Common myeloid progenitor, CD34-positive (primary cell): ENCODE measurements at regions of chr1 and their contacts with region 1.

Region 1: GRCh38 chr1:153842006-153842471 is 66.8 kb downstream of the SLC27A3 start:
- DNase-seq: no peak
- H3K4me3 ChIP-seq: no peak overlapping the region
- H3K27ac ChIP-seq: no peak overlapping the region
- H3K4me1 ChIP-seq: no peaks in the 10 kb centered on the region
- H3K27me3 ChIP-seq: no peaks in the 10 kb centered on the region

Region 2: DNA sequence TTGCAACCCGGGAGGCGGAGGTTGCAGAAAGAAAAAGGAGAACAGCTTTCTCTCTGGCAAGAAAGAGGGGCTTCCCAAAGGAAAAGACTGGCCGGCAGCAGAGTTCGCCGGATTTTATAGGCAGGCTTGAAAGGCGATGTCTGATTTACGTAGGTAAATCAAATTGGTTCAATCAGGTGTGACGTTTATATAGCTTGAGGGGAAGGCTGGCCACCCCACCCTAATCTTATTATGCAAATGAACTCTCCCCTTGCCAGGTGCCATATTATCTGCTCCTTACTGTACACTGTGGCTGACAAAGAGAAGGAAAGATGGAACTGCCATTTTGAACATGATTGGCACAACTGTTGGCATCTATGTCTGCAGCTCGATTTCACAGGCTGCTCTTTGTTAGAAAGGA is 131.0 kb before region 1 on chr1:
- CTCF ChIA-PET with region 1: no interaction called
- POLR2A ChIA-PET with region 1: no interaction called
- DNase-seq: no peak
- H3K4me3 ChIP-seq: no peak overlapping the region
- H3K27ac ChIP-seq: no peak overlapping the region
- H3K4me1 ChIP-seq: no peaks in the 10 kb centered on the region
- H3K27me3 ChIP-seq: no peaks in the 10 kb centered on the region

Region 3: DNA sequence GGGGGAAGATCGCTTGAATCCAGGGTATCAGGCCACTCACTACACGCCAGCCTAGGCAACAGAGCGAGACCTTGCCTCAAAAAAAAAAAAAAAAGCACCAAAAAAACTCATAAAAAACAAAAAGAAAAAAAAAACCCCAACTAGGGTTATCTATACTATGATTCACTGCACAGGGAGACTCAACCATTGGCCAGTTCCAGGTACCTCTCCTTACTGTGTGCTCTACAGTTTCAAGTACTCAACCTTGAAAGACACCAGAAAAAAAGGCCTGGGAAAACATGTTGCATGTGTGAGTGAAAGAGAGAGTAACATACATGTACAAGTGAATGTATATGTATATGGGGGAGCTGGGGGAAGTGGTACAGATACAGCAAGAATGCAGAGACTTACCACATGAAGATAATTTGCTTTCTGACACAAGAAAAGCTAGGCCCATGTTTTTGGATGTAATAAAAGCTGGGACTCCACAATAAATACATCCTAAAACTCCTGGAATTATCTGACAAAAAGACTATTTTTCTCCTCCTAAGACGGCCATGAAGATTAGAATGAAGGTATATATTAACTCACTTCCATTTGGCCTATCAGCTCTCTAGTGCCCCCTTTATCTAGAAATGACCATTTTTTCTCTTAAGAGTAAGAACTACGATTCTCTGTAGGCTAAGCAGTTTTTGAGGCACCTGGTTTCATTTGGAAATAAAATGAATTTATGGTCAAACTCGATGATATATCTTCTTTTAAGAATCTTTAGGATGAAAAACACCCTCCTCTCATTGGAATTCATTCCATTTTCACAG is 14.7 kb before region 1 on chr1:
- CTCF ChIA-PET with region 1: interaction called, 13 read pairs
- POLR2A ChIA-PET with region 1: no interaction called
- DNase-seq: peak in 2 of 3 donors; percentile 14 to 24
- H3K4me3 ChIP-seq: no peak overlapping the region
- H3K27ac ChIP-seq: no peak overlapping the region
- H3K4me1 ChIP-seq: peaks cover 0 to 1% (median 0%) of the 10 kb centered on the region in 4 experiments
- H3K27me3 ChIP-seq: no peaks in the 10 kb centered on the region